Activated T-helper 2 cell treated with anti-CD3 and anti-CD28 coated beads, Interferon-gamma antibody, Interleukin-2, Interleukin-4, amounts not matched to agents 10 μg/mL and 5 μg/mL and 100 μg/mL, durations not matched to agents 14 hours and 24 hours and 36 hours (primary cell): ENCODE measurements at regions of chr15 and their contacts with region 1.

Region 1: GRCh38 chr15:41557673-41558399 is 1.2 kb upstream of the TYRO3 start:
- DNase-seq: peak; percentile 62
- H3K4me3 Mint-ChIP-seq: peak overlapping the region; percentile 83
- H3K27ac Mint-ChIP-seq: peak overlapping the region; percentile 71
- H3K4me1 Mint-ChIP-seq: peaks cover 20% of the 10 kb centered on the region
- H3K27me3 Mint-ChIP-seq: peaks cover 42% of the 10 kb centered on the region

Region 2: DNA sequence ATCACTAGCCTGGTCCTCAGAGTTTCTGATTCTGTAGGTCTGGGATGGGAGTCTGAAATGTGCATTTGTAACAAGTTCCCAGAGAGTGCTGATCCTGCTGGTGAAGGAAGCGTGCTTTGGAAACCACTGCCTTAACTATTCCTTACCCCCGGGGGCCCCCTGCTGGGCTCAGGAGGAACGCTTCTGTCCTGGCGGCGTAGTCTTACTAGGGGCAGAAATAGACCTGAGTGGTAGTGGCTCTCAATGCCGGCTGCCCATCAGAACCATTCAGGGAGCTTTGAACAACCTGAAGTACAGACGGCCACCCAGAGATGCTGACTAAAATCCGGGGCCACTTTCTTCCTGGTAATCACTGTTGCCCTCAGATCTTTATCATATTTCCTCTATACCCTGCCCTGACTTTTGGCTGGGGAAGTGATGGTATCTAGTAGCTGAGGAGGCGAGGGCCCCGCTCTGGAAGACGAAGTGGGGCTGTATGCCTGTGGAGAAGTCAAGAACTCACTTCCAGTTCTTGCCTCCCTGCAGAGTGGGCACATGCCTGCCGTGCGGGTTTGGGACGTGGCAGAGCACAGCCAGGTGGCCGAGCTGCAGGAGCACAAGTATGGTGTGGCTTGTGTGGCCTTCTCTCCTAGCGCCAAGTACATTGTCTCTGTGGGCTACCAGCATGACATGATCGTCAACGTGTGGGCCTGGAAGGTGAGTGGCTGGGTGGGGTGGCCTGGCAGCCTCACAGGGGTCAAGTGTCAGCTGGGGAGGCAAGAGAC is 253.8 kb after region 1 on chr15:
- intact Hi-C with region 1: loop called (anchors 5 kb)
- DNase-seq: peak; percentile 59
- H3K4me3 Mint-ChIP-seq: no peak overlapping the region
- H3K27ac Mint-ChIP-seq: peak overlapping the region; percentile 36
- H3K4me1 Mint-ChIP-seq: peaks cover 26% of the 10 kb centered on the region
- H3K27me3 Mint-ChIP-seq: no peaks in the 10 kb centered on the region

Region 3: DNA sequence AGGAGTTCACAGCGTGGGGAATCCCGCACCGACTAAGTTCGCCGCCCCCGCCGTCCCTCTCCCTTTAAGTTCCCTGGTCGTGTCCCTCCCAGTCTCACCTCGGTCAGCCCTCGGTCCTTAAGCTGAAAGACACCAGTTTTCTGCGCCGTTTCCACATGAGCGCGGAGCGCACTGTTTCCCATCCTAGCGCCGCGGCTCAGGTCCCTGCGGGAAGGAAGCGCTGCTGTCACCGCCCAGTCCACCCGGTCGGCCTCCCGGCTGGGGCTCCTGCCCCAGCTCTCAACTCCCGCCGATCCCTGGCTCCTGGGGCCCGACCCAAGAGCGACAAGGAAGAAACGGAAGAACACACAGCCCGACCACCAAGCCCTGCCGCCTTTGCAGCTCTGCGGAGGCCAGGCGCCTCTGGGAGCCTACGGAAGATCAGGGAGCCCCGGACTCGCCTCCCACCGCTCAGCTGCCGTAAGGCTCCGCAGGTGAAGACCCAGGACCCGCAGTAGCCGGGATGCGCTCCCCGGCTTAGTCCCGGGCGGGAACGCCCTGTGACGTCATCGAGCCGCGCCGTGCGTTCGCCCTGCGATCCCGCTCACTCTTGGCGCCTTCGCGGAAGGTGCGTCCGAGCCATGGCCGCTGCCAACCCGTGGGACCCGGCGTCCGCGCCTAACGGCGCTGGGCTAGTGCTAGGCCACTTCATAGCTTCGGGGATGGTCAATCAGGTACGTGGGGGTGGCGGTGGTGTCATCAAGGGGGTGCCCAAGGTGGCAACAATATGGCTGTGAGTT is 990.6 kb after region 1 on chr15 and contains the starts of genes HAUS2 and LRRC57:
- intact Hi-C with region 1: no loop called
- DNase-seq: peak; percentile 84
- H3K4me3 Mint-ChIP-seq: peak within 1 kb of the TSS; percentile 92
- H3K27ac Mint-ChIP-seq: peak within 1 kb of the TSS; percentile 92
- H3K4me1 Mint-ChIP-seq: peaks cover 36% of the 10 kb centered on the region
- H3K27me3 Mint-ChIP-seq: no peaks in the 10 kb centered on the region
- total RNA-seq, gene HAUS2: 42.9 and 45.5 TPM in 2 replicates
- total RNA-seq, gene LRRC57: 21.0 and 22.5 TPM in 2 replicates